Right ventricle myocardium inferior (tissue), 1 donor: ENCODE measurements at regions of chr21 and their contacts with region 1.

Region 1: DNA sequence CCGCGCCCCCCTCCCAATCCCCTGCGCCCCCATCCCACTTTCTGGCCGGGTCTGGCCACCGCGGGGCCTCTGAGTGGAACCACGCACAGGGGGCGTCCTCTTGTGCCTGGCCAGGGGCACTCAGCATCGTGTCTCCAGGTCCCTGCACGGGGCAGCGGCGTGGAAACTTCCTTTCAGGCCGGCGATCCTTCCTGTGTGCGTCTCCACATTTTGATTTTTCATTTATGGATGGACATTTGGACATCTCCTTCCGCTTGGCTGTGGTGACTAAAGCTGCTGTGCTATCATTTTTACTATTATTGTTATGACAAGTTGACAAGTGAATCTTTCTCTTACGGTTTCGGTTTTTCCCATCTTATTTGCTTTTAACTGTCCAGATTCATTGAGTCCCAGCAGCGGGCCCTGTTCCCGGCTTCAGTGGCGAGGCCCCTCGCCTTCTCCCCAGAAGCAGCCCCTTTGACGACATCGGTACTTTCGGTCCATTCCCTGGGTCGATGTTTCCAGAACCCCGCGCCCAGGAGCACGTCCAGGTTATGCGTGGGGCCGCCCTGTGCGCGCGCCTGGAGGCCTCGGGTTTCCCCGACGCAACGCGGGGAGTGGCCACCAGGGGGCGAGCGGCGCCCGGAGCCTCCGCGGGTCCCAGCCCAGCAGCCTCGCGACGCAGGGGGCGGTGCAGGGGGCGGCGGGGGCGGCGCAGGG is 12.4 kb upstream of the SLC19A1 start:
- DNase-seq: peak; percentile 93
- ATAC-seq: peak; percentile 85

Region 2: DNA sequence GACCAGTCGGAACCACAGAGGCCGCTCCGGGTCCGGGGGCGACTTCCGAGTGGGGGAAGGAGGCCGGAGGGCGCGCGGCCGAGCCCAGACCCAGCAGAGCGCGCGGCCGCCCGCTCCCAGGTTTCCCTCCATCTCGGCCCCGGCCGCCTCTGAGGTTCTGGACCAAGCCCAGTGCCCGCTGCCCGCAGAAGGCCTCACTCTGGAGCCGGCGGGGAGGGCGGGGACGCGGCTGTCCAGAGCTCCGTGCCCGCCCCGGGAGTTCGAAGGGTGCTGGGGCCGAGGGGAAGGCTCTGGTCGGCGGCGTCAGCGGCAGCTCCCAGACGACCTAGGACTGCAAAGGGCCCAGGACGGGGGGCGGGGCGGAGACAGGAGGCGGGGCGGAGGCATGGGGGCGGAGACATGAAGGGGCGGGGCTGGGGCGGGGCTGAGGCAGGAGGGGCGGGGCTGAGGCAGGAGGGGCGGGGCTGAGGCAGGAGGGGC is 35.7 kb after region 1 on chr21:
- intact Hi-C with region 1: loop called (anchors 5 kb)
- DNase-seq: peak; percentile 85
- ATAC-seq: peak; percentile 91

Region 3: DNA sequence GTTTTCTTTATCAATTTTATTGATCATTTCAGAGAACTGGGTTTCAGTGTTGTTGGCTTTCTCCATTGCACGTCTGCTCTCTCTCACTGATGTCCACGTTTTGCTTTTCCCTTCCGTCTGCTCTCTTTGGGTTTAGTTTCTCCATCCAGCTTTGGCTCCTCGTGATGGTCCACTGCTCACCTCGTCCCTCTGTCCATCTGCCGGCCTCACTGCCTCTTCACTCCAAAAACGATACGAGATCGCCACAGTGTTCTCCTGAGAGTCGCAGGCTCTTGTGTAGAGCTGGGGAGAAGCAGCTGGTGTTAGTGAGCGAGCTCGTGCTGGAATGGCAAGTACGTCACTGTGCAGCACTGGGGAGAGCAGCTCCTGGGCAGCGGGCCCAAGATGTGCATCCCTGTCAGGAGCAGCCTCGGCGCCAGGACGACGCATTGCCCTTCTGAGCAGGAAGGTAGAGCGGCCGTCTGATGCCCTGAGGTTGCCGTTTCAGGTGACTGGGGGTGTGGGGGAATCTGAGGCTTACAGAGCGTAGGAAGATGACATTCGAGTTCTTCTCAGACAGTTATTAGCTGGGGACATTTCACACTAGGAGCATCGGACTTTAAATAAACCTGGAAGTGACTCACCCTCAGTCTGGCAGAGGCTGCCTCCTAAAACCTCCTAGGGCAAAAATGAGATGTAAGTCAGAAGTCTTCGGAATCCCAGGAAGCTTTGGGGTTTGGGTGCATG is 57.5 kb after region 1 on chr21:
- intact Hi-C with region 1: no loop called
- DNase-seq: no peak
- ATAC-seq: no peak

Region 4: GRCh38 chr21:45820171-45821091 is 265.8 kb after region 1 on chr21:
- intact Hi-C with region 1: loop called (anchors 1 kb)
- DNase-seq: peak; percentile 86
- ATAC-seq: peak; percentile 78